A549 (cell line): ENCODE measurements at regions of chr10 and their contacts with region 1.

Region 1: GRCh38 chr10:103278862-103279298 is 1.9 kb downstream of the INA start:
- DNase-seq: peak in 1 of 2 experiments; percentile 60
- ATAC-seq: no peak
- H3K4me3 ChIP-seq: no peak overlapping the region
- H3K27ac ChIP-seq: no peak overlapping the region
- H3K4me1 ChIP-seq: peaks cover 16% of the 10 kb centered on the region
- CTCF ChIP-seq: no peak
- EP300 ChIP-seq: no peak
- POLR2A ChIP-seq: no peak
- RAD21 ChIP-seq: no peak

Region 2: GRCh38 chr10:103265717-103266329 is 13.1 kb before region 1 on chr10:
- CTCF ChIA-PET with region 1: interaction called, 19 read pairs
- POLR2A ChIA-PET with region 1: interaction called, 3 read pairs
- DNase-seq: peak; percentile 25 to 72
- ATAC-seq: peak; percentile 76 to 78; a peak in 5 of 6 replicates
- H3K4me3 ChIP-seq: no peak overlapping the region
- H3K27ac ChIP-seq: no peak overlapping the region
- H3K4me1 ChIP-seq: no peaks in the 10 kb centered on the region
- CTCF ChIP-seq: no peak
- EP300 ChIP-seq: no peak
- POLR2A ChIP-seq: no peak
- RAD21 ChIP-seq: no peak

Region 3: DNA sequence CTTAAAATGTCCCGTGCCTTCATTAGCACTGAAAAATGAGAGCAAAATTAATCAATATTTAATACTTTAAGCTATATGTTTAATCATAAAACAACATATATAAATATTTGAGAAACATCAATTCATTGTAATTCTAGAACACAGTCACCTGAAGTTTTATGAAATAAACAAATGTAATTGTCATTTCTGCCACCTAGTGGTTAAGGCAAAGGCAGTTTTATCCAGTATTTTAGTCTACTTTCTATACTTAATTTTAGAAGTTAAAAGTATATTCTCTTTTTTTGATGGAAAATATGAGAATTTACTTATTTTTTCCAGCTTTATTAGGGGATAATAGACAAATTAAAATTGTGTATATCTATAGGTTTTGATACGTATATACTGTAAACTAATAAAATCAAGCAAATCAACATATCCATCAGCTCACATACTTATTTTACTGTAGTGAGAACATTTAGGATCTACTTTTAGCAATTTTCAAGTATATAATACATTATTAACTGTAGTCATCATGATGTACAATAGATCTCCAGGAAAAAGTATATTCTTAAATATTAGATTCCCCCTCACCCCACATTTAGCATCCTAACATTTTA is 55.1 kb after region 1 on chr10:
- CTCF ChIA-PET with region 1: interaction called, 24 read pairs
- POLR2A ChIA-PET with region 1: no interaction called
- DNase-seq: peak; percentile 34 to 35
- ATAC-seq: no peak
- H3K4me3 ChIP-seq: no peak overlapping the region
- H3K27ac ChIP-seq: no peak overlapping the region
- H3K4me1 ChIP-seq: no peaks in the 10 kb centered on the region
- CTCF ChIP-seq: peak; percentile 69; the same call in 2 of the 3 replicates
- EP300 ChIP-seq: no peak
- POLR2A ChIP-seq: no peak
- RAD21 ChIP-seq: peak; percentile 60 to 79

Region 4: DNA sequence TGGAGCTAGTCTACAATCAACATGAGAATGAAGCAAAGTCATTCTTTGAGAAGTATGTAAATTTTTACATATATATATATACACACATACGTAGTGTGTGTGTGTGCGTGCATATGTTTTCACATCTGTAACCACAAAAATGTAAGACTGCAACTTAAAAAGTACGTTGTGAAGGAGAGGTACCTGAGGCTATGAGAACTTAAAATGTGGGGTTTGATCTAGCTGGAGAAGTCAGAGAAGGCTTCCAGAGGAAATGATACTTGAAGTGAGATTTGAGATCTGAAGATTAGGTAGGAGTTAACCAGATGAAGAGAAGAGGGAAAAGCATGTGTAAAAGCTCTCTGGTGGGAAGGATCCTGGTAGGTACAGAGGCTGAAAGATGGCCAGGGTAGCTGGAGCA is 94.7 kb after region 1 on chr10:
- CTCF ChIA-PET with region 1: no interaction called
- POLR2A ChIA-PET with region 1: no interaction called
- DNase-seq: no peak
- ATAC-seq: no peak
- H3K4me3 ChIP-seq: no peak overlapping the region
- H3K27ac ChIP-seq: no peak overlapping the region
- H3K4me1 ChIP-seq: peaks cover 9% of the 10 kb centered on the region; the same call in 2 of the 3 replicates
- CTCF ChIP-seq: no peak
- EP300 ChIP-seq: no peak
- POLR2A ChIP-seq: no peak
- RAD21 ChIP-seq: no peak